ENCODE measurements at regions of chr1 and their contacts with region 1.

Region 1: DNA sequence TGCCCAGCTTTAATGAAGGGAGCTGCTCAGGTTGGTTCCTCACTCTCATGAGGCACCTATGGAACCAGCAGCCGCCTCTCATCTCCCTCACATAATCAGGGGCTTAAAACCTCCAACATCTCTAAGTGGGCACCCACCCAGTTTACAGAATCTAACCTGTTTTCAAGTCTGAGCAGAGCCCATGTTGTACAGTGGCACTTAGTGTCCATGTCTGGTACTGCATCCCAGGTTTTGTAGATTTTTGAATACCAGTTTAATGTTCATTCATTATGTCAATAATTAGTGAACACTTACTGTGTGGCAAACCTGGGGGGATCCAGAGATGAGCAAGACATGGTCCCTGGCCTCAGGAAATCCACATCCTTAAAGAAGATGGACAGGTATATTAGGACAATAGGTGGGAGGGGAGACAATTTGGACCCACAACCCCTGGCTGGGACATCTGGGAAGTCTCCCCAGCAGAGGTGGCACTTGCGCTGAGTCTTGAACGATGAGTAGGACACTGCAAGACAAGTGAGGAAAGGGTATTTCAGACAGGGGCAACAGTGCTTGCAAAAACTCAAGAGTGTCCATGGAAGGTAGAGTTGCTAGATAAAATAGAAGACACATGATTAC is 83.3 kb downstream of the LACTBL1 start:
- DNase-seq: peak; percentile 54
- H3K4me3 ChIP-seq: no peak overlapping the region
- H3K27ac ChIP-seq: no peak overlapping the region
- H3K4me1 ChIP-seq: no peaks in the 10 kb centered on the region
- H3K27me3 ChIP-seq: no peaks in the 10 kb centered on the region
- CTCF ChIP-seq: peak; percentile 81

Region 2: DNA sequence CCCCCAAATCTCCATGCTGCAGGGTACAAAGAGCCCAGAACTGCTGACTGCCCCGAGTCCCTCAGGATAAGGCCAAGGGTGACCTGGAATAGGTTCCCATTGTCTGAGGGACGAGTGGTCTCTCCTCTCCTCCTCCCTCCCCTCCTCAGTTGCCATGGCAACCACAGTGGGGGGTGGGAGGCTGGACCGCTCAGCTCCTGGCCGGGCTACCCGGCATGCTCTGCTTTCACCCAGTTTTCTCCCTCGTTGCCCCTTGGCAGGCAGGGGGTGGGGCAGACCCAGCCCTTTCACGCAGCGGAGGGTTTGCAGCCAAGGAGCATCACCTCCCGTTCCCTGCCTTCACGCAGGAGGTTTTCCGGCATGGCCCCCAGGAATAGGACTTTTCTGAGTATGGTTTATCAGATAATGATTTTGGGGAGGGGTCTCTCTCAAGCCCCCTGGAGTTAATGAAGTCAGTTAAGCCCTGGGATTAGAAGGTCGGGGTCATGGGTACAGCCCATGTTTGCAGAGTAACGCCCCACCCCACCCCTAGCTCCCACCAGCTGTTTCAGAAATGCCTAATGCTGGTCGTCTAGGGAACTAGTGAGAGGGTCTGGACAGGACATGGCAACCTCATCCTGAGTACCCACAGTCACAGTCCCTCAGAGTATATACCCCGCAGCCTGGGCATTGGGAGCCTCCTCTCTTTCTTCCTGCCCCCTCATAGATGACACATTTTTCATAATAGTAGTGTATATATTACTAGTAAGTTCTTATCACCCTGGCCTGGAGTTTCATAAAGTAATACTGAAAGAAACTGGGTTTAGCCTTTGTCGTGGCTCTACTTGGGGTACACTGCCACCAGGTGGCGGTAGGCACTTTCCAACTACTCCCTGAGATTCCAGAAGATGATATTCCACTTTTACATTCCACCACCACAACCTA is 215.6 kb before region 1 on chr1:
- CTCF ChIA-PET with region 1: no interaction called
- POLR2A ChIA-PET with region 1: no interaction called
- intact Hi-C with region 1: loop called (anchors 10 kb)
- DNase-seq: peak; percentile 63
- H3K4me3 ChIP-seq: no peak overlapping the region
- H3K27ac ChIP-seq: no peak overlapping the region
- H3K4me1 ChIP-seq: peaks cover 21% of the 10 kb centered on the region
- H3K27me3 ChIP-seq: no peaks in the 10 kb centered on the region
- CTCF ChIP-seq: peak; percentile 88

Region 3: DNA sequence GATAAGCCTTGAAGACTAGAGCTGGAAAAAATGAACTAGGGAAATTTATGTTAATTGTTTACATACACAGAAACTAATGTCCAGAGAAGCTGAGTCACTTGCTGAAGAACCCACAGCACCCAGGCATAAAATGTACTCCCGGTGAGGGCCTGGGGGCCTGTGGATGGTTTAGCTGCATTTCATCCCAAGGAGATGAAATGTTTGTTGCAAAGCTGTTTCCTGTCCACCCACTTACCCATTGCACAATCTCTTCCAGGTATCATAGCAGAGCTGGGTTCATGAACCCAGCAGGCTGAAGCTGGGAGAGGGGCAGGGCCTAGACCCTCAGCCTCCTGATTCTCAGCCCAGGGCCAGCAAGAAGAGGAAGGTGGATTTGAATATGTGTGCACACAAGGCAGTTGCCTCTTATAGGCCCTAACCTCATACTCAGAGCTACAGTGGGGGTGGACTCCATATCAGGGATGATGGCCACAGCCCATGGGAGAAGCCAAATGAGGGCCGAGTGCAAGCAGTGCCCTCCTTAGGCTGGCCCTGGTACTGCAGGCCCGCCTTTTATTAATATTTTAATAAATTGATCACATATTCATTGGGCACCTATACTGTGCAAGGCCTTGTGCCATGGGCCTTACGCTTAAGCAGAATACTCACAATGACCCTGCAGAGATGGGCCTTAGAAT is 27.4 kb before region 1 on chr1:
- CTCF ChIA-PET with region 1: no interaction called
- POLR2A ChIA-PET with region 1: no interaction called
- intact Hi-C with region 1: no loop called
- DNase-seq: peak; percentile 46
- H3K4me3 ChIP-seq: no peak overlapping the region
- H3K27ac ChIP-seq: no peak overlapping the region
- H3K4me1 ChIP-seq: no peaks in the 10 kb centered on the region
- H3K27me3 ChIP-seq: no peaks in the 10 kb centered on the region
- CTCF ChIP-seq: peak; percentile 86

Region 4: GRCh38 chr1:22903113-22903512 is 13.8 kb after region 1 on chr1:
- CTCF ChIA-PET with region 1: no interaction called
- POLR2A ChIA-PET with region 1: interaction called, 18 read pairs
- intact Hi-C with region 1: no loop called
- DNase-seq: no peak
- H3K4me3 ChIP-seq: no peak overlapping the region
- H3K27ac ChIP-seq: no peak overlapping the region
- H3K4me1 ChIP-seq: no peaks in the 10 kb centered on the region
- H3K27me3 ChIP-seq: no peaks in the 10 kb centered on the region
- CTCF ChIP-seq: no peak

Region 5: GRCh38 chr1:22912311-22912710 is 23.0 kb after region 1 on chr1:
- CTCF ChIA-PET with region 1: interaction called, 10 read pairs
- POLR2A ChIA-PET with region 1: no interaction called
- intact Hi-C with region 1: no loop called
- DNase-seq: no peak
- H3K4me3 ChIP-seq: no peak overlapping the region
- H3K27ac ChIP-seq: no peak overlapping the region
- H3K4me1 ChIP-seq: peaks cover 22% of the 10 kb centered on the region
- H3K27me3 ChIP-seq: no peaks in the 10 kb centered on the region
- CTCF ChIP-seq: no peak

Measured in A673 (cell line).